Endothelial cell of umbilical vein (primary cell): ENCODE measurements at regions of chr1 and their contacts with region 1.

Region 1: DNA sequence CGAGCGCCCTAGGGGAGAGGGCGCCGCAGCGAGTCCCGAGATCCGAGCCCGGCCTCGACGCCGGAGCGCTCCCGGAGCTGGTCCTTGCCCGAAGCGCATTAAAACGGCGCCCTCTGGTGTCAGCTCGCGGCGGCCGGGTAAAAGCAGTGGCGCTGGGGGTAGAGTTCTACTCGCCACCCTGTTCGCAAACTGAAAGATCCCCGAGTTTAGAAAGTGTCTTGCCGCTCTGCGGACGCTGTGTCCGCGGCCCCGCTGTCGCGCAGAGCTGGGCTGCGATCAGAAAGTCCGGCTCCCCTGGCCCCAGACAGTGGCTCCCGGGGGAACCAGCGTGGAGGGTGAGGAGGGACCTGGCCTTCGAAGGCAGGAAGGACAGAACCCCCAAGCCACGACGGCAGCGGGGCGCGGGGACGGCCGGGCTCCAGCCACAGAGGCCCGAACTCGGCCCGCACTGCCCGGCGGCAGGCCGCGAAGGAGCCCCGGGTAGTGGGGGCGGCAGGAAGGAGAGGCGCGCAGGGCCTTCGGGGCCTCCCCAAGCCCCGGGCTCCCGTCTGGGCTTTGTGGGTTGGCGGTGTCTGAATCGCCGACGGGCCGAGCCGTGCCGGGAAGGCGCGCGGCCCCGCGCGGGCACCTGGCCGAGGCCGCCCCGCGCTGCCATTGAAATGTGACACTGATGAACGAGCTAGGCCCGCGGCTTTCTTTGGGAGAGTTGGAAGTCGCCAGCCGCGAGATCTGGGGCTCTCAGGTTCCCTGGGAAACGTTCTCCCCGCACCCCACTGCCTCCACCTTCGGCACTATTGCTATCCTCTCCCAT is 39.1 kb upstream of the NFIA start:
- DNase-seq: peak; percentile 85
- H3K4me3 ChIP-seq: peak overlapping the region; percentile 39 to 59 (median 54)
- H3K27ac ChIP-seq: peak overlapping the region; percentile 62
- H3K4me1 ChIP-seq: peaks cover 2% of the 10 kb centered on the region
- H3K27me3 ChIP-seq: no peaks in the 10 kb centered on the region
- CTCF ChIP-seq: peak; percentile 85 to 94
- POLR2A ChIP-seq: no peak

Region 2: GRCh38 chr1:59971464-59971911 is 1071.7 kb before region 1 on chr1:
- CTCF ChIA-PET with region 1: interaction called, 17 read pairs
- POLR2A ChIA-PET with region 1: no interaction called
- dilution Hi-C with region 1: no loop called
- intact Hi-C with region 1: loop called (anchors 1 kb)
- DNase-seq: peak; percentile 63
- H3K4me3 ChIP-seq: no peak overlapping the region
- H3K27ac ChIP-seq: no peak overlapping the region
- H3K4me1 ChIP-seq: peaks cover 2% of the 10 kb centered on the region
- H3K27me3 ChIP-seq: peaks cover 0 to 11% of the 10 kb centered on the region in 2 experiments
- CTCF ChIP-seq: peak; percentile 83 to 91
- POLR2A ChIP-seq: no peak

Region 3: DNA sequence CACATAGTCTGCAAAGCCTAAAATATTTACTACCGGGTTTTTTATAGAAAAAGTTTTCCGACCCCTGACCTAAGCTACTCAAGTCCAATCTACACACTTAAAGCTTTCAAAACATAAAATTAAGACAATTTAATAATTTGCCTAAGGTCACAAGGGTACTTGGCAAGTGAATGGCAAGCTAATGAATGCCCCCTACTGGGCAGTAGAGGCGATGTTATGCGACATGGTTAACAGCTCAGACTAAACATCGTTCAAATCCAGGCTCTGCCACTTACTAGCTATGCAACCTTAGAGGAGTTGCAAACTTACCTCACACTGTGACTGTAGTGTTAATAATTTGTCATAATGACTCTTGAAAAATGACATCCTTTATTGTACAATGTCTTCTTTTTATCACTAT is 278.0 kb before region 1 on chr1:
- CTCF ChIA-PET with region 1: interaction called, 10 read pairs
- POLR2A ChIA-PET with region 1: no interaction called
- dilution Hi-C with region 1: no loop called
- intact Hi-C with region 1: loop called (anchors 10 kb)
- DNase-seq: peak; percentile 49
- H3K4me3 ChIP-seq: no peak overlapping the region
- H3K27ac ChIP-seq: no peak overlapping the region
- H3K4me1 ChIP-seq: peaks cover 13% of the 10 kb centered on the region
- H3K27me3 ChIP-seq: no peaks in the 10 kb centered on the region
- CTCF ChIP-seq: peak; percentile 44 to 51
- POLR2A ChIP-seq: no peak

Region 4: GRCh38 chr1:60874716-60875115 is 168.5 kb before region 1 on chr1:
- CTCF ChIA-PET with region 1: no interaction called
- POLR2A ChIA-PET with region 1: no interaction called
- dilution Hi-C with region 1: no loop called
- intact Hi-C with region 1: no loop called
- DNase-seq: peak; percentile 82
- H3K4me3 ChIP-seq: no peak overlapping the region
- H3K27ac ChIP-seq: peak overlapping the region; percentile 36
- H3K4me1 ChIP-seq: peaks cover 21% of the 10 kb centered on the region
- H3K27me3 ChIP-seq: no peaks in the 10 kb centered on the region
- CTCF ChIP-seq: no peak
- POLR2A ChIP-seq: no peak

Region 5: DNA sequence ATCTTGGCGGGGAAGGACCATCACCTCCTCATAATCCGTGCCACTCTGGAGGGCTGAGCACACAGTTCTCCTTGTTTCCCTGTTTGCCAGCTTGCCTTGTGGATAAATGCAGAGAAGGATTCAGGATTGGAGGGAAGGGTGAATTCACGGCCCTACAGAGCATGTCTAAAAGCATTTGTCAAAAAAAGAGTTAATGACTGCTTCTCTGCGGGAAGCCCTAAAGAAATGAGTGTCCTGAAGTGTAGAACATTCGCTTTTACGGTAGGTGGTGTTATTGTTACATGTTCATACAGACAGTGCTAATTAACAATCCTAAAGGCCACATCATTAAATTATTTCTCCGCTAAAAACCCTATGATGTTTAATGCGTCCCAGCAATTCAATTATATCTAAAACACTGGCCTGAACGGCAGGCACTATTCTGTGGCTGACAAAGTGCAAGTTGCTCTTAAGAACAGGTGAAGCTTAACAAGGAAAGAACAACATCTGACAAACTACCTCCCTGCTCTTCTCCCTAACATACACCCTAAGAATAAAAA is 73.2 kb before region 1 on chr1:
- CTCF ChIA-PET with region 1: interaction called, 94 read pairs
- POLR2A ChIA-PET with region 1: no interaction called
- dilution Hi-C with region 1: no loop called
- intact Hi-C with region 1: loop called (anchors 2 kb)
- DNase-seq: peak; percentile 57
- H3K4me3 ChIP-seq: no peak overlapping the region
- H3K27ac ChIP-seq: no peak overlapping the region
- H3K4me1 ChIP-seq: peaks cover 5% of the 10 kb centered on the region
- H3K27me3 ChIP-seq: no peaks in the 10 kb centered on the region
- CTCF ChIP-seq: peak in 1 of 2 donors; percentile 21
- POLR2A ChIP-seq: no peak

Region 6: GRCh38 chr1:61028136-61028535 is 15.1 kb before region 1 on chr1:
- CTCF ChIA-PET with region 1: interaction called, 11 read pairs
- POLR2A ChIA-PET with region 1: no interaction called
- dilution Hi-C with region 1: no loop called
- intact Hi-C with region 1: no loop called
- DNase-seq: no peak
- H3K4me3 ChIP-seq: no peak overlapping the region
- H3K27ac ChIP-seq: no peak overlapping the region
- H3K4me1 ChIP-seq: no peaks in the 10 kb centered on the region
- H3K27me3 ChIP-seq: no peaks in the 10 kb centered on the region
- CTCF ChIP-seq: no peak
- POLR2A ChIP-seq: no peak

Region 7: DNA sequence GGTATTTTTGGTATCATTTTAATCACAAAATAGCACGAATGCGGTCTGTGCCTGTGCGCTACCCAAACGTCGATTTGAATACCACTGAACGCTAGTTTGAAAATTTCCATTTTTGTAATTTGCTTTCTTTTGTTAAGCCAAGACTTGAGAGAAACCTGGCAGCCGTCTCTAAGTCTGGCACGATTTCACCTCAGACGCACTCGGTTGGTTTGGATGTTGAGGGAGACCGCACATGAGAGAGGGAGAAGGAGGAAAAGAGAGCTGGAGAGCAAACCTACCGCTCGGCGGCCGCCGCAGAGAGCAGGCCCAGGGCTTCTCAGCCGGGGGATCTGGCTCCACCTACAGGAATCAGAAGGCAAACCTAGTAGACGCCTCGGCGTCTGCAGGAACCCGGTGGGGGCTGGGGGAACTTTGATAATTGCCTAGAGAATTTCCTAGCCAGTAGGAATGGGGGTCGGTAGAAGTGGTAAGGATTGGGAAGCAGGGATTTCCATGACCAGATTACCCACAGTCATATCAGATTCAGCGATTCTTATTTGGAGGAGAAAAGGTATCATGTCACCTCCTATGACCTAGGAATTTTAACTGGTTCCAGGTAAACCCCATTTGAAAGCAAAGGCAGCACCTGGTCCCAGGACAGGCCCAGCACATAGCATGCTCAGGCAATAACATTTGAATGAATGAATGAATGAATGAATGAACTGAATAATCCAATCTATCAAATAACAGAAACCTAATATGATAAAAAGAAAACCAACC is 598.5 kb after region 1 on chr1:
- CTCF ChIA-PET with region 1: no interaction called
- POLR2A ChIA-PET with region 1: no interaction called
- dilution Hi-C with region 1: no loop called
- intact Hi-C with region 1: loop called (anchors 2 kb)
- DNase-seq: peak; percentile 75
- H3K4me3 ChIP-seq: peak overlapping the region in 1 of 3 experiments; percentile 37
- H3K27ac ChIP-seq: no peak overlapping the region
- H3K4me1 ChIP-seq: peaks cover 7% of the 10 kb centered on the region
- H3K27me3 ChIP-seq: no peaks in the 10 kb centered on the region
- CTCF ChIP-seq: peak; percentile 60 to 90
- POLR2A ChIP-seq: no peak